Left colon (tissue), 2 donors: ENCODE measurements at regions of chr5 and their contacts with region 1.

Region 1: GRCh38 chr5:151002250-151002649 is 18.1 kb upstream of the GPX3 start:
- DNase-seq: no peak
- ATAC-seq: peak; percentile 46

Region 2: GRCh38 chr5:151115274-151115905 is 113.1 kb after region 1 on chr5:
- intact Hi-C with region 1: loop called in 1 of 2 experiments (anchors 2 kb)
- DNase-seq: peak; percentile 68 to 83
- ATAC-seq: peak; percentile 82